ENCODE measurements at regions of chr1 and their contacts with region 1.

Region 1: GRCh38 chr1:38012363-38013226 is at the start of gene UTP11:
- DNase-seq: peak; percentile 94
- H3K4me3 ChIP-seq: peak within 1 kb of the TSS; percentile 74 to 90 (median 84)
- H3K27ac ChIP-seq: peak within 1 kb of the TSS; percentile 92 to 96 (median 96)
- H3K4me1 ChIP-seq: peaks cover 6 to 44% (median 28%) of the 10 kb centered on the region in 4 donors
- H3K27me3 ChIP-seq: no peaks in the 10 kb centered on the region
- CTCF ChIP-seq: no peak
- EP300 ChIP-seq: no peak
- POLR2A ChIP-seq: peak; percentile 70
- total RNA-seq, gene UTP11: 3.2 to 22.2 (median 15.3) TPM

Region 2: GRCh38 chr1:37682334-37682987 is 330.1 kb before region 1 on chr1:
- in situ Hi-C with region 1: no loop called
- intact Hi-C with region 1: no loop called
- DNase-seq: peak; percentile 70
- H3K4me3 ChIP-seq: no peak overlapping the region
- H3K27ac ChIP-seq: no peak overlapping the region
- H3K4me1 ChIP-seq: peaks cover 0 to 3% (median 0%) of the 10 kb centered on the region in 4 donors
- H3K27me3 ChIP-seq: no peaks in the 10 kb centered on the region
- CTCF ChIP-seq: peak; percentile 83 to 88 (median 87)
- EP300 ChIP-seq: no peak
- POLR2A ChIP-seq: no peak

Region 3: GRCh38 chr1:37995751-37996345 is 16.7 kb before region 1 on chr1:
- in situ Hi-C with region 1: no loop called
- intact Hi-C with region 1: loop called (anchors 1 kb)
- DNase-seq: peak; percentile 74
- H3K4me3 ChIP-seq: peak overlapping the region; percentile 39 to 53 (median 47)
- H3K27ac ChIP-seq: peak overlapping the region; percentile 82 to 94 (median 90)
- H3K4me1 ChIP-seq: peaks cover 22 to 49% (median 38%) of the 10 kb centered on the region in 4 donors
- H3K27me3 ChIP-seq: peaks cover 7% of the 10 kb centered on the region
- CTCF ChIP-seq: no peak
- EP300 ChIP-seq: peak; percentile 64
- POLR2A ChIP-seq: no peak